ENCODE measurements at regions of chr11 and their contacts with region 1.

Region 1: DNA sequence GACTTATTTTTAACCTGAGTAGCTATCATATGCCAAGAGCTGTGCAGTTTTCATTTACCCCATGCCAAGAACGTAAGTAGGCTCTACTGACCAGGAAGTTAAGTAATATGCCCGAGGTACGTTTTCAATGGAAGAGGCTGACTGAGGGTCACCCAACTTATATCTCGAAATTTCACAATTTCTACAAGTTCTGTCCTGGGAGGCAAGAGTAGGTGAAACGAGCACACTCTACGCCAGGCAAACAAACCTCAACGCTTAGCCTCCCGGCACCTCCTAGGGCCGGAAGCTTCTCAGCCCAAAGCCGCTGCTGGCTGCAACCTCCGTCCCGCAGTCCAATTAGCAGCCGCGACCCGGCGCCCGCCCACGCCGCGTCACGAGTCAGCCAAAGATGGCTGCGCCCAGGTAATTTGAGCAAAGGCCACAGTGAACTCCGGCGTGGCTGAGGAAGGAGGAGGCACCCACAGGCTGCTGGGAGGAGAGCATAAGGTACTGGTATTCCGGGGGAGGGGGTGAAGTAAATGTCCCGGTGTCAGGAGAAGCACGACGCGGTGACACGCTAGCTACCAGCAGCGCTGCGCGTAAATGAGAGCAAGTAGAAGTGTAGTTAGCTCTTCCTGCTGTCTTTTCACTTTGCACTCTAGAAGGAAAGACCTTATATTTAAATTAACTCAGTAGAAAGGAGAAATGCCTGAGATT is at the start of gene TMEM126A:
- DNase-seq: peak; percentile 75 to 94
- H3K4me3 ChIP-seq: peak within 1 kb of the TSS; percentile 58 to 88 (median 70)
- H3K27ac ChIP-seq: peak within 1 kb of the TSS; percentile 66; the same call in 1 of the 2 replicates
- H3K4me1 ChIP-seq: peaks cover 0 to 8% (median 0%) of the 10 kb centered on the region in 4 experiments; a peak in 4 of 7 replicates
- H3K27me3 ChIP-seq: no peaks in the 10 kb centered on the region
- CTCF ChIP-seq: no peak
- EP300 ChIP-seq: peak in 1 of 2 experiments; percentile 31; a peak in 1 of 3 replicates
- POLR2A ChIP-seq: peak; percentile 65 to 94
- RAD21 ChIP-seq: peak; percentile 1 to 7; a peak in 1 of 4 replicates
- total RNA-seq, gene TMEM126A: 33.7 and 36.2 TPM in 2 replicates

Region 2: DNA sequence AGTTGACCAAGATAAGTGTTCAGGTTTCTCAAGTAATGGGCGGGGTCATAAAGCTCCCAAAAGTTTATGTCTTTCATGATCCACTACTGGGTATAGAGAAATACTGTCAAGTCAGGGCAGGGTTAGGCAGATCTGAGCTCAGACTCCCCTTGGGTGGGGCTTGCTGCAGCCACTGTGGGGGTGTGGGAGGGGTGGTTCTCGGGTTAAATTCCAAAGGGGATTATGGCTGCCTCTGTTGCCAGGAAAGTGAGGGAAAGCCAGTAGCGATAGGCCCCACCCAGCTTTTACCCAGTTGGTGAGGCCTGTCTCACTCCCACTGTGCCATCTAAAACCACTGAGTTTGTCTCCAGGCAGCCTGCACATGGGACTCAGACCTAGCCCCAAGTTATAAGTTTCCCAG is 58.4 kb before region 1 on chr11:
- CTCF ChIA-PET with region 1: no interaction called
- POLR2A ChIA-PET with region 1: no interaction called
- DNase-seq: no peak
- H3K4me3 ChIP-seq: no peak overlapping the region
- H3K27ac ChIP-seq: no peak overlapping the region
- H3K4me1 ChIP-seq: no peaks in the 10 kb centered on the region; a peak in 3 of 7 replicates
- H3K27me3 ChIP-seq: no peaks in the 10 kb centered on the region
- CTCF ChIP-seq: no peak
- EP300 ChIP-seq: no peak
- POLR2A ChIP-seq: no peak
- RAD21 ChIP-seq: no peak

Region 3: GRCh38 chr11:85627998-85628770 is 19.6 kb before region 1 on chr11 and contains the start of gene TMEM126B:
- CTCF ChIA-PET with region 1: no interaction called
- POLR2A ChIA-PET with region 1: interaction called, 20 read pairs
- DNase-seq: peak; percentile 88 to 94
- H3K4me3 ChIP-seq: peak within 1 kb of the TSS; percentile 78 to 95 (median 92)
- H3K27ac ChIP-seq: peak within 1 kb of the TSS; percentile 68
- H3K4me1 ChIP-seq: peaks cover 0 to 9% (median 0%) of the 10 kb centered on the region in 4 experiments; a peak in 4 of 7 replicates
- H3K27me3 ChIP-seq: no peaks in the 10 kb centered on the region
- CTCF ChIP-seq: no peak
- EP300 ChIP-seq: no peak
- POLR2A ChIP-seq: peak; percentile 74 to 93
- RAD21 ChIP-seq: no peak
- total RNA-seq, gene TMEM126B: 82.8 and 85.6 TPM in 2 replicates

Region 4: GRCh38 chr11:85634747-85635146 is 13.0 kb before region 1 on chr11:
- CTCF ChIA-PET with region 1: interaction called, 4 read pairs
- POLR2A ChIA-PET with region 1: interaction called, 45 read pairs
- DNase-seq: no peak
- H3K4me3 ChIP-seq: no peak overlapping the region
- H3K27ac ChIP-seq: no peak overlapping the region
- H3K4me1 ChIP-seq: peaks cover 0 to 4% (median 0%) of the 10 kb centered on the region in 4 experiments; a peak in 4 of 7 replicates
- H3K27me3 ChIP-seq: no peaks in the 10 kb centered on the region
- CTCF ChIP-seq: no peak
- EP300 ChIP-seq: no peak
- POLR2A ChIP-seq: no peak
- RAD21 ChIP-seq: no peak

Measured in H1 (cell line).